ENCODE measurements at regions of chr7 and their contacts with region 1.

Region 1: DNA sequence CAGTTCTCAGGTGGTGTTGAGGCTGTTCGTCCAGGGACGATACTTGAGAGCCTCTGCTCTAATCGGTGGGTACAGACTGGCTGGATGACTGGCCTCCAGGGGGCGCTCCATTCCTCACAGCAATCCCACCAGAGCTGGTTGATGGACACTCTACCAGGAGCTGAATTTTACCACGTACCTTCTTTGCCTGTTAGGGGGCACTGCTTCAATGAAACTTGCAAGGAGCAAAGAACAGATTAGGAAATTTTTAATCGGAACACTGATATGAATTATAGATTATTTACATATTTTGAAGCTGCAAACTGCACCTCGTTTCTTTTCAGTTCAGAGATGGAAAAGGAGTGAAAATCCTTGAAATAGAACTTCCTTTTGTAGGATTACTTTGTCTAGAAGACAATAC is 44.9 kb downstream of the KBTBD2 start:
- DNase-seq: peak; percentile 83 to 92 (median 84)
- H3K4me3 ChIP-seq: no peak overlapping the region
- H3K4me3 Mint-ChIP-seq: peak overlapping the region in 3 of 7 donors; percentile 16 to 48 (median 48)
- H3K27ac ChIP-seq: no peak overlapping the region
- H3K27ac Mint-ChIP-seq: peak overlapping the region in 5 of 8 donors; percentile 1 to 88 (median 43)
- H3K4me1 ChIP-seq: no peaks in the 10 kb centered on the region
- H3K4me1 Mint-ChIP-seq: peaks cover 4 to 10% (median 7%) of the 10 kb centered on the region in 3 donors
- H3K27me3 ChIP-seq: peaks cover 6% of the 10 kb centered on the region
- H3K27me3 Mint-ChIP-seq: peaks cover 8 to 44% of the 10 kb centered on the region in 2 donors

Region 2: DNA sequence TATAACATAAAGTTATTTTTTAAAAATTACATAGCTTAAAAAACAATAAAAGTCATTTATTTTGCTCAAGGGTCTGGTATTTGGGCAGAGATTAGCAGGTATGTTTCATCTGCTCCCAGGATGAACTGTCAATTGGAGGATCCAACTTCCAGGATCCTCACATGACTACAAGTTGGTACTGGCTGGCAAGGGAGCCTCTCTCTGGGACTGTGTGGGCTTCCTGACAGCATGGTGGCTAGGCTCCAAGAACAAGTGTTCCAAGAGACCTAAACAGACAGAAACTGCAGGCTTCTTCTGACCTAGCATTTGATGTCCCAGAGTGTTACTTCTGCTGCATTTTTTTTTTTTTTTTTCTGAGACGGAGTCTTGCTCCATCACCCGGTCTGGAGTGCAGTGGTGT is 244.2 kb before region 1 on chr7:
- CTCF ChIA-PET with region 1: no interaction called
- POLR2A ChIA-PET with region 1: no interaction called
- DNase-seq: no peak
- H3K4me3 ChIP-seq: no peak overlapping the region
- H3K4me3 Mint-ChIP-seq: no peak overlapping the region
- H3K27ac ChIP-seq: no peak overlapping the region
- H3K27ac Mint-ChIP-seq: no peak overlapping the region
- H3K4me1 ChIP-seq: no peaks in the 10 kb centered on the region
- H3K4me1 Mint-ChIP-seq: no peaks in the 10 kb centered on the region
- H3K27me3 ChIP-seq: no peaks in the 10 kb centered on the region
- H3K27me3 Mint-ChIP-seq: peaks cover 5 to 12% of the 10 kb centered on the region in 2 donors

Region 3: DNA sequence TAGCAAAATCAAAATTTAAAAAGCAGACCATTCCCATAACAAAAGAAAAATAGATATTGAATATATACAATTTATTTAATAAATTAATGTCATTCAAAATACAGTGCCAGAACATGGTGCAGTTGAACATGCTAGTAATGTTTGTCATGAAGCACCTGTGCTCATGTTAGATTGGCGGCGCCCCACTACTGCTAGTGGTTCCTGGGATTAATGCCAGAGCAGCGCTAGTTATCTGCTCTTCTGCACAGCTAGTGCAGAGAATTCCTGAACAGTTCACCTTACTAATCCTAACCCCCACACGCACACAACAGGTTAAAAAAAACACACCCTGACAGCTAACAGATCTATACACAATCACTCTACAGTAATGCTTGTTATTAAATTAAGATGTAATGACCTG is 21.4 kb after region 1 on chr7:
- CTCF ChIA-PET with region 1: interaction called, 10 read pairs
- POLR2A ChIA-PET with region 1: no interaction called
- DNase-seq: no peak
- H3K4me3 ChIP-seq: no peak overlapping the region
- H3K4me3 Mint-ChIP-seq: no peak overlapping the region
- H3K27ac ChIP-seq: no peak overlapping the region
- H3K27ac Mint-ChIP-seq: peak overlapping the region in 3 of 8 donors; percentile 12 to 31 (median 29)
- H3K4me1 ChIP-seq: peaks cover 5% of the 10 kb centered on the region
- H3K4me1 Mint-ChIP-seq: peaks cover 8 to 51% (median 32%) of the 10 kb centered on the region in 3 donors
- H3K27me3 ChIP-seq: no peaks in the 10 kb centered on the region
- H3K27me3 Mint-ChIP-seq: no peaks in the 10 kb centered on the region

Region 4: DNA sequence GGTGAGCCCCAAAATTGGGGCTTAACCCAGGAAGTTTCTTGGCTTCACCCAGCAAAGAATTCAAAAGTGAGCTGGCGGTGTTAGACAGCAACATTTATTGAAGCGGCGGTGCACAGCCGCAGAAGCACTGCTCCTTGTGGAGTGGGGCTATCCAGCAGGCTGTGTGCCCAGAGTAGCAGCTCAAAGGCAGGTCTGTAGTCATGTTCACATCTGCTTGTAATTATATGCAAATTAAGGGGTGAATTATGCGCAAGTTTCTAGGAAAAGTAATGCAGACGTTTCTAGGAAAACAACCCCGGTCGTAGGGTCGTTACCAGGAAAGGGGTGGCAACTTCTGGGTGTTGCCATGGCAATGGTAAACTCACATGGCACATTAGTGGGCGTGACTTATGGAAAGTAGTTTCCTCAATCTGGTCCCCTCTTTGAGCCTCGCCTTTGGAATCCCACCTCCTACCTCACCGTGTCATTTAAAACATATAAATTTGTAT is 58.5 kb after region 1 on chr7:
- CTCF ChIA-PET with region 1: interaction called, 15 read pairs
- POLR2A ChIA-PET with region 1: no interaction called
- DNase-seq: peak; percentile 56 to 85 (median 79)
- H3K4me3 ChIP-seq: peak overlapping the region; percentile 58
- H3K4me3 Mint-ChIP-seq: peak overlapping the region; percentile 71 to 90 (median 85)
- H3K27ac ChIP-seq: peak overlapping the region; percentile 84
- H3K27ac Mint-ChIP-seq: peak overlapping the region; percentile 85 to 97 (median 94)
- H3K4me1 ChIP-seq: peaks cover 12% of the 10 kb centered on the region
- H3K4me1 Mint-ChIP-seq: peaks cover 9 to 19% (median 14%) of the 10 kb centered on the region in 3 donors
- H3K27me3 ChIP-seq: no peaks in the 10 kb centered on the region
- H3K27me3 Mint-ChIP-seq: no peaks in the 10 kb centered on the region

Region 5: DNA sequence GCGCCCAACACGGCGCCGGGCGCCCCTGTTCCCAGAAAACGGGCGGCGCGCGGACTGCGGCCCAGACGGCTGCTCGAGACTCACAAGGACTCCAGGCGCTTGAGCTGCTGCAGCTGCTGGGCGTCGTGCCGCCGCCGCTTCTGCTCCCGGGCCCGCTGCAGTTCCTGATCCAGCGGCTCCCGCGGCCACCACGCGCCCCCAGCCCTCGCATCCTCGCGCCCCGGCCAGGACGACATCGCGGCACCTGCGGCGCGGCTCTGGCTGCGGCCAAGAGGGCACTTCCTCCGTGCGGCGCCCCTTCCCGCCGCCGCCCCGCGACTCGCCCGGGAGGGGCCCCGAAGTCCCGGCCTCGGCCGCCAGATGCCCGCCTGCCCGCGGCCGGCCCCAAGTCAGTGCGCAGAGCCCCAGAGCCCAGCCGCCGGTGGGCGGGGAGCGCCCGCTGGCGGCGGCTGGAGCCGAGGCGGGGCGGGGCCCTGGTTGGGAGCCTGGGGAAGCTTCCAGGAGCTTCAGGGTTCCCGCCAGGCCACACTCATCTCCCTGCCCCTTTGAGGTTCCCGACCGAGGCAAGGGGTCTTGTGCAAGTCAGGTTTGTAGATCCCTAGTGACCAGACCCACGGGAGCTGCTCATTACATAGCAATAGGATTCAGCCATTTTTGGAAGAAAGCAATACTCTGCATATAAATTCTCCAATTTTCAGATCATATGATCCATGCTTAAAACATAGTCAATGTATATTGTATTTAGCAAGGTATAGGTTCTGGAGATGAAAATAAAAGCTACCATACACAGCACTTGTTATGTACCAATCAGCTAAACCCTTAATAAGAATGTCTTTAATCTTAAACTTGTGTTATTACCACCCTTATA is 96.3 kb after region 1 on chr7:
- CTCF ChIA-PET with region 1: interaction called, 110 read pairs
- POLR2A ChIA-PET with region 1: no interaction called
- DNase-seq: peak; percentile 57 to 69 (median 60)
- H3K4me3 ChIP-seq: peak overlapping the region; percentile 50
- H3K4me3 Mint-ChIP-seq: peak overlapping the region; percentile 72 to 90 (median 80)
- H3K27ac ChIP-seq: peak overlapping the region; percentile 46
- H3K27ac Mint-ChIP-seq: peak overlapping the region in 1 of 8 donors; percentile 84
- H3K4me1 ChIP-seq: peaks cover 10% of the 10 kb centered on the region
- H3K4me1 Mint-ChIP-seq: peaks cover 7 to 20% (median 12%) of the 10 kb centered on the region in 3 donors
- H3K27me3 ChIP-seq: no peaks in the 10 kb centered on the region
- H3K27me3 Mint-ChIP-seq: peaks cover 3 to 12% of the 10 kb centered on the region in 2 donors

Region 6: GRCh38 chr7:33109005-33109757 is 262.5 kb after region 1 on chr7 and contains the start of gene RP9:
- CTCF ChIA-PET with region 1: interaction called, 20 read pairs
- POLR2A ChIA-PET with region 1: no interaction called
- DNase-seq: peak; percentile 66 to 82 (median 78)
- H3K4me3 ChIP-seq: peak within 1 kb of the TSS; percentile 82
- H3K4me3 Mint-ChIP-seq: peak within 1 kb of the TSS; percentile 76 to 92 (median 84)
- H3K27ac ChIP-seq: peak within 1 kb of the TSS; percentile 74
- H3K27ac Mint-ChIP-seq: peak within 1 kb of the TSS; percentile 34 to 92 (median 83)
- H3K4me1 ChIP-seq: peaks cover 26% of the 10 kb centered on the region
- H3K4me1 Mint-ChIP-seq: peaks cover 32 to 55% (median 50%) of the 10 kb centered on the region in 3 donors
- H3K27me3 ChIP-seq: no peaks in the 10 kb centered on the region
- H3K27me3 Mint-ChIP-seq: peaks cover 3 to 14% of the 10 kb centered on the region in 2 donors
- total RNA-seq, gene RP9: 26.0 to 27.7 TPM